Astrocyte of the cerebellum (primary cell): ENCODE measurements at regions of chr1 and their contacts with region 1.

Region 1: DNA sequence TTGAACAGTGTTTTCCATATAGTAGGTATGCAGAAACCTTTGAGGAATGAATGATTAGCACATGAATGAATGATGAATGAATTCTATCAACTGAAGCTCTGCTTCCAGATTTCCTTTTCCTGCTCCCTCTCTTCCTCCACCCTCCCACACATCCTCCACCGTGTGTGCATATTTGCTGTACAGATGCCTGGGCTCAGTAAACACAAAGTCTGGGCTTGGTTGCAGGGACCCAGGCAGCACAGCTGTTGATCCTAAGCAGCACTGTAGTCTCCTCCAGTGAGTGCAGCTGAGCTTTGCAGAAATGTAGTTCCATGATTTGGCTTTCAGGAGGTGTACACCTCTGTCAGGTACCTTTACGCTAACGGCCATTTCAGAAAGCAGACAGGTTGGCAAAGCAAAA is 611.7 kb downstream of the NUF2 start:
- DNase-seq: no peak
- H3K4me3 ChIP-seq: no peak overlapping the region
- CTCF ChIP-seq: no peak

Region 2: DNA sequence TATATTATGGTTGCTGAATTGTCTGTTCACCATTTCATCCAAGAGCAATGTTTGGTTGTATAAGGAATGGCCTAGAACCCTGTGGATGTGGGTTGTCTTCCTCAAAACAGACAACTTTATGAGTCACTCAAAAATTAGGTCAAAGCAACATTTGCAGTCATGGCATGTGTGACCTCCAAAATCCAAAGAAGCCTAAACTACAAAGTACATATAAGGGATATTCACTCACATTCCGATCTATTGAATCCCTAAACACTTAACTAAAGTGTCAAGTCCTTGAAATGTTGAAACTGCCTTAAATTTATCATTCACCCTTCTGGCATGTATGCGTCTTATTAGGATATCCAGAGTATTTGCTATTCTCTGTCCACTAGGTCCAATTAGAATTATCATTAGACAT is 120.2 kb before region 1 on chr1:
- in situ Hi-C with region 1: no loop called
- DNase-seq: no peak
- H3K4me3 ChIP-seq: no peak overlapping the region
- CTCF ChIP-seq: no peak

Region 3: DNA sequence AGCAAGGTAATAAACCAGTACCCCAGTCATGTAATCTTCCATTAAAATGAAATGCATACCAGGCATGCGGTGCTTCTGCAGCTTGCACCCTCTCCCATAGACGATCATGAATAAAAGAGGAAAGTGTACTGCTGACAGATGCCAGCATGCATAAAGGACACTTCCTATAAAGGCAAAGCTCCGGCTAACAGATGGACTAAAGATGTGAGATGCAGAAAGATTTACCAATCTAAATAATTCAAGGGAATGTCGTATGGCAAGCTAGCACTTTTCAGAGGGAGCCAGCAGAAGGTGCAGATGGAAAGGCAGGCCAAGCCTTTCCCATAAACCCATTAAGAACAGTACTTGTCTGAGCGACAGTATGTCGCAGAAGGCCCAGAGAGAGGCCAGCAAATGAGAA is 69.7 kb before region 1 on chr1:
- in situ Hi-C with region 1: loop called (anchors 5 kb)
- DNase-seq: no peak
- H3K4me3 ChIP-seq: no peak overlapping the region
- CTCF ChIP-seq: no peak